Thyroid gland (tissue), 4 donors: ENCODE measurements at regions of chr4 and their contacts with region 1.

Region 1: DNA sequence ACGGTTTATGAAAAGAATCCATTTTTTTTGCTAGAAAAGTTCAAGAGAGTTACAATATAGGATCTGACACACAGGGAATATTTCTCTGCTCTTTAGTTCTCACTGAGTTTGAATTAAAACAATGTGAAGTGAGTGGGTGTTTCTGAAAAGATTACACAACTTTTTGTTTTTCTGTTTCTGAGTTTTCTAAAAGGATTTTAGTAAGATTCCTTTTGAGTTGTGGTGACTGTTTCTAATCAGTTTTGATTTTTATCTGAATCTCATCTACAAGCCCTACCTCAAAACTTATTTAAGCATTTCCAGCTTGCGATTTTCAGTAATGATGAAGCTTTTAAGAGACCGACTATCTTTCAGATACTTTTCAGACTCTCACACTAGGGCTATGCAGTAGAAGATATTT is 141.7 kb downstream of the GPAT3 start:
- DNase-seq: no peak
- H3K4me3 ChIP-seq: no peak overlapping the region
- H3K27ac ChIP-seq: no peak overlapping the region
- H3K4me1 ChIP-seq: no peaks in the 10 kb centered on the region
- H3K27me3 ChIP-seq: no peaks in the 10 kb centered on the region
- CTCF ChIP-seq: no peak
- POLR2A ChIP-seq: no peak

Region 2: GRCh38 chr4:83780053-83780728 is 102.5 kb after region 1 on chr4:
- intact Hi-C with region 1: loop called (anchors 5 kb)
- DNase-seq: no peak
- H3K4me3 ChIP-seq: no peak overlapping the region
- H3K27ac ChIP-seq: no peak overlapping the region
- H3K4me1 ChIP-seq: no peaks in the 10 kb centered on the region
- H3K27me3 ChIP-seq: no peaks in the 10 kb centered on the region
- CTCF ChIP-seq: no peak
- POLR2A ChIP-seq: no peak